RWPE1 (cell line): ENCODE measurements at regions of chr12 and their contacts with region 1.

Region 1: DNA sequence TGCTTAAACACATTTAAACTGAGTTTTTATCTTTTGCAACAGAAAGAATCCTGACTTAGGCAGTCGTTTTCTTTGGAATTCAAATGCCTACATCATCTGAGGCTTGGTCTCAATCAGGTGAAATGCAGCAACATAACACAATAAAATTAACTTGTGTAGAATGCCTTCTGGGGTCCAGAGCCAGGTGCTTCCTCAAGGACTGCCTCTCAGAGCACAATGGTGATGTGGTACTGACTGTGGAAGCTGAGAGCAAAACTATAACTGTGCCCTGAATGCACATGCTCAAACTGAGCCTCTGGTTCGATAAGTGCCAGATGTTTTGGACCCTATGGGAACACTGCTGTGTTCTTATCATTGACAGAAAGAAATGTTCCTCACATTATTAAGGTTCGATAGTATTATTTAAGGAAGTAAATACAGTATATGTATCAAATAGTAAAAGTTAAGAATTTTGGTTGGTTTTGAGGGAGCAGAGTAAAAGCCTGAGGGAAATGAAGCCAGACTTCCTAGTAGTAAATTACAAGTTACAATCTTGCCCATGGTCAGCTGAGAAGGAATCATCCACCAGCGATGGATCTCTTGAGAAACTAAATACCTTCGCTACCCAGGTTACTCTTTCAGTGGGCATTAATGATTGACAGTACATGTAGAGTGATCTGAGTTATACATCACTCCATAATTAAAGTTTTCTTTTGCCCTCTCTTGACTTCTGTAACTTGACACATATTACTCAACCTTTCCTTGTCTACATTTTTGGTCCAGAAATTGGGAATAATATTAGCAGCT is 122.9 kb upstream of the ATP2B1 start:
- DNase-seq: no peak
- H3K27ac ChIP-seq: no peak overlapping the region
- CTCF ChIP-seq: no peak

Region 2: GRCh38 chr12:89753997-89754396 is 77.5 kb before region 1 on chr12:
- CTCF ChIA-PET with region 1: interaction called, 10 read pairs
- POLR2A ChIA-PET with region 1: no interaction called
- DNase-seq: no peak
- H3K27ac ChIP-seq: no peak overlapping the region
- CTCF ChIP-seq: no peak

Region 3: DNA sequence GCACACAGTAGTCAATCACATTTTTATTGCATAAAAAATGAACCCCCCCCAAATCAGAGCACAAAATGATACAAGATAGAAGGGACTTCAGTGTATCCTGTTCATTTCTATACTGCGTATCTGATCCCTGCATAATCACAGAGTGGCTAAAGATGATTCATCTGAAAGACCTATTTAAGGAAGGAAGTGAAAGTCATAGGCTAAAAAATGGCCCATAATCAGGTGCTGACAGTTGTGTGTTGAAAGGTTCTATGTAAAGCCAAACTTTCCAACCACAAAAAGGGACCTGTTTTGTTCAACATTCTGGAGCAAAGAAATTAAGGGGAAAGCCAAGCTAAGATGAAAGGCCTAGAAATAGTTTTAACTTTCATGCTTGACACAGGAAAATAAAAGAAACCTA is 24.9 kb after region 1 on chr12:
- CTCF ChIA-PET with region 1: no interaction called
- POLR2A ChIA-PET with region 1: no interaction called
- DNase-seq: peak; percentile 9
- H3K27ac ChIP-seq: no peak overlapping the region
- CTCF ChIP-seq: no peak

Region 4: DNA sequence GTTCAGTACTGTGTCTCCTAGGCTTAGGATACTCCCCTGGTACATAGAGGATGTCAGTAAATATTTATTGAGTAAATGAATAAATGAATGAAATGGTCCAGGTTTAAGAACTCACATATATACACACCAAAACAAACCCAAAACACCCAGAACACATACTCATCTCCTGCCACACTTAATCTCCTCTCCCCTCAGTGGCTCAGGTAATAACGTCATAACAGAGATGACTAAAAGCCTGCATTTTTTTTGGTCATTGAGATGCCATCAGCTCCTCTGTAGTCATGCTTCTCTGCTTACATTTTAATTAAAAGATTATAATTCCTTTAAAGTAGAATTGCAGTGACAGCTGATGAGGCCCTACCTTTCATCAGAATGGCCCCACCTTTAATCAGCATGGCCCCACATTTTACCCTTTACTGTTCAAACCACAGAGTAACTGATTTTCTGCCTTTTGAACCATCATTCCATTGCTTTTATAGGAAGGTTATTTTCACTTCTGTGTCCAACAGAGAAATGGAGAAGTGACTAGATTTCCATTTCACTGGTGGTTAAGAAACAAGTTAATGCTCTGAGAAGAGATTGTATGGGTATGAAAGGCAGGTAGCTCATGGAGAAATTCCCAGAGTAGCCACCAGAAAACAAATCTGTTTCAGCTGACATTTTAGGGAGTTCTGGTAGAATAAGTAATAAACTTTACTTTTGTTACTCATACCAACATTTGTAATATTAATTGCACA is 70.6 kb after region 1 on chr12:
- CTCF ChIA-PET with region 1: no interaction called
- POLR2A ChIA-PET with region 1: no interaction called
- DNase-seq: no peak
- H3K27ac ChIP-seq: no peak overlapping the region
- CTCF ChIP-seq: no peak